ENCODE measurements at regions of chr14 and their contacts with region 1.

Region 1: DNA sequence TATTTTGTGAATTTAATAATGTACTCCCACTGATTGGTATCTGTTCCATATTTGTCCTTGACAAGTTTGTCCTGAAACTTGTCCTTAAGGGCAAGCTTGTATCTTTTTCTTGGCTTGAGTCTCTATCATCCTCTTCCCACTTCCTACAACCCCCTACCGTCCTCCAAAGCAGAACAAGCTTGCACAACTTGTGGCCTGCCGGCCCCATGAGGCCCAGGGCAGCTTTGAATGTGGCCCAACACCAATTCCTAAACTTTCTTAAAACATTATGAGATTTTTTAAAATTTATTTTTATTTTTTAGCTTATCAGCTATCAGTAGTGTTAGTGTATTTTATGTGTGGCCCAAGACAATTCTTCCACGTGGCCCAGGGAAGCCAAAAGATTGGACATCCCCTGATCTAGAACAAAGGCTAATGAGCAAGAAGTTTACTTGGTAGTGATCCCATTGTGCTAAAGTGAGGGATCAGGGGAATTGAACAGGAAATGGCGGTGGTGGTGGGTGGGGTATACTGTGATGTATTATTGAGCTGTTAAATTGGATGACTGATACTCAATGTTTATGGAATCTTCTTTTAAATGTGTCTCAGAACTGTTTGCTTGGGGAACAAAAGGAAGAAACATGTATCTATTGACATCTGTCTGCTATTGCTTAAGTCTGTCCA is 37.8 kb downstream of the TMX1 start:
- DNase-seq: no peak
- H3K4me3 ChIP-seq: no peak overlapping the region
- H3K27ac ChIP-seq: no peak overlapping the region
- H3K4me1 ChIP-seq: no peaks in the 10 kb centered on the region
- H3K27me3 ChIP-seq: no peaks in the 10 kb centered on the region
- CTCF ChIP-seq: no peak
- POLR2A ChIP-seq: no peak

Region 2: GRCh38 chr14:50906326-50907065 is 371.4 kb before region 1 on chr14:
- intact Hi-C with region 1: no loop called
- DNase-seq: no peak
- H3K4me3 ChIP-seq: no peak overlapping the region
- H3K27ac ChIP-seq: peak overlapping the region; percentile 8 to 46
- H3K4me1 ChIP-seq: no peaks in the 10 kb centered on the region
- H3K27me3 ChIP-seq: no peaks in the 10 kb centered on the region
- CTCF ChIP-seq: no peak
- POLR2A ChIP-seq: no peak

Region 3: GRCh38 chr14:51219473-51220448 is 58.1 kb before region 1 on chr14:
- intact Hi-C with region 1: no loop called
- DNase-seq: no peak
- H3K4me3 ChIP-seq: no peak overlapping the region
- H3K27ac ChIP-seq: no peak overlapping the region
- H3K4me1 ChIP-seq: no peaks in the 10 kb centered on the region
- H3K27me3 ChIP-seq: no peaks in the 10 kb centered on the region
- CTCF ChIP-seq: peak in 2 of 3 donors; percentile 50 to 58
- POLR2A ChIP-seq: no peak

Region 4: GRCh38 chr14:51774209-51774608 is 496.3 kb after region 1 on chr14:
- intact Hi-C with region 1: loop called (anchors 2 kb)
- DNase-seq: no peak
- H3K4me3 ChIP-seq: no peak overlapping the region
- H3K27ac ChIP-seq: no peak overlapping the region
- H3K4me1 ChIP-seq: no peaks in the 10 kb centered on the region
- H3K27me3 ChIP-seq: no peaks in the 10 kb centered on the region
- CTCF ChIP-seq: no peak
- POLR2A ChIP-seq: no peak